ENCODE measurements at regions of chr1 and their contacts with region 1.

Region 1: GRCh38 chr1:225923692-225924555 is at the start of gene PYCR2:
- DNase-seq: peak; percentile 86 to 99
- H3K4me3 ChIP-seq: peak within 1 kb of the TSS; percentile 100
- H3K27ac ChIP-seq: peak within 1 kb of the TSS; percentile 72
- H3K4me1 ChIP-seq: peaks cover 16% of the 10 kb centered on the region
- H3K27me3 ChIP-seq: no peaks in the 10 kb centered on the region
- CTCF ChIP-seq: no peak
- total RNA-seq, gene PYCR2: 100 and 112 TPM in 2 replicates

Region 2: GRCh38 chr1:225580238-225581099 is 343.5 kb before region 1 on chr1:
- CTCF ChIA-PET with region 1: no interaction called
- POLR2A ChIA-PET with region 1: no interaction called
- intact Hi-C with region 1: no loop called
- DNase-seq: no peak
- H3K4me3 ChIP-seq: no peak overlapping the region
- H3K27ac ChIP-seq: no peak overlapping the region
- H3K4me1 ChIP-seq: no peaks in the 10 kb centered on the region
- H3K27me3 ChIP-seq: no peaks in the 10 kb centered on the region
- CTCF ChIP-seq: no peak

Region 3: DNA sequence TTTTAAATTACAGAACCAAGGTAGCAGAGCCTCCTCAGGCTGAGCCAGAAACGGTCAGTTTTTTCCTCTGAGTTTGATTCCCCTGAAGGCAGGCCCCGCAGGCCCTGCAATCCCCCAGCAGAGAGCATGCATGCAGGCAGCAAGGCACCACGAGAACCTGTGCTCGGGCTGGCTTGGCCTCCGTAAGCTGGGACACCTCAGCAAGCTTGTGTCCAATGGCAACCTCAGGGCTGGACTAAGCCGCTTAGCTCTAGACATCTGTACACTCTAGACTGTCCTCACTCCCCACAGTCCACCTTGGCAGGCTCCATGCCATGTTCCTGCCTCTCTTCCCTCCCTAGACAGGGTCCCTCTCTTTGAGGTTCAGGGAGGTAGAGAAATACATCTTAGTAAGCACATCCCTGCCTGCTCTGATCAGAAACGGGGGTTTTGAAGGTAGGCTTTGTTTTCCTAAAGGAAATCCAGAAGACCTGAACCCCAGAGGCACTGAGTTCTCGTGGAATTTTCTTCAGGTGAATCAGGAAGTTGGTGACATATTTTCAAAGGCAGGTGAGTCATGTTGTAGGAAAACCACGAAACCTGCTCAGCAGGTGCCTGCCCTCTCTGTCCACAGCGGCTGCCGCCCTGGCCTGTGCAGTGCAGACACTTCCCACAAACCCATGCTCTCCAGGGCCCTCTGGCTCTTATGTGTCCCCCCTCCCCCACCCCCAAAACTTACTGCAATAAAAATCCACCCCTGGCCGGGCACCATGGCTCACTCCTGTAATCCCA is 48.7 kb before region 1 on chr1:
- CTCF ChIA-PET with region 1: interaction called, 4 read pairs
- POLR2A ChIA-PET with region 1: no interaction called
- intact Hi-C with region 1: loop called (anchors 1 kb)
- DNase-seq: peak; percentile 92 to 96
- H3K4me3 ChIP-seq: peak overlapping the region; percentile 30; the same call in 1 of the 2 replicates
- H3K27ac ChIP-seq: peak overlapping the region; percentile 91
- H3K4me1 ChIP-seq: peaks cover 91% of the 10 kb centered on the region
- H3K27me3 ChIP-seq: no peaks in the 10 kb centered on the region
- CTCF ChIP-seq: no peak

Region 4: GRCh38 chr1:225881969-225882693 is 41.8 kb before region 1 on chr1 and contains the start of gene TMEM63A:
- CTCF ChIA-PET with region 1: interaction called, 4 read pairs
- POLR2A ChIA-PET with region 1: interaction called, 6 read pairs
- intact Hi-C with region 1: loop called (anchors 1 kb)
- DNase-seq: peak; percentile 75 to 95
- H3K4me3 ChIP-seq: peak within 1 kb of the TSS; percentile 92
- H3K27ac ChIP-seq: peak within 1 kb of the TSS; percentile 75
- H3K4me1 ChIP-seq: peaks cover 57% of the 10 kb centered on the region
- H3K27me3 ChIP-seq: no peaks in the 10 kb centered on the region
- CTCF ChIP-seq: no peak; the same call in 1 of the 2 replicates
- total RNA-seq, gene TMEM63A: 115 and 126 TPM in 2 replicates

Region 5: GRCh38 chr1:225962440-225962975 is 38.6 kb after region 1 on chr1:
- CTCF ChIA-PET with region 1: no interaction called
- POLR2A ChIA-PET with region 1: no interaction called
- intact Hi-C with region 1: no loop called
- DNase-seq: peak in 1 of 2 experiments; percentile 20
- H3K4me3 ChIP-seq: no peak overlapping the region
- H3K27ac ChIP-seq: no peak overlapping the region
- H3K4me1 ChIP-seq: no peaks in the 10 kb centered on the region
- H3K27me3 ChIP-seq: no peaks in the 10 kb centered on the region
- CTCF ChIP-seq: peak; percentile 42; the same call in 1 of the 2 replicates